A673 (cell line): ENCODE measurements at regions of chr2 and their contacts with region 1.

Region 1: DNA sequence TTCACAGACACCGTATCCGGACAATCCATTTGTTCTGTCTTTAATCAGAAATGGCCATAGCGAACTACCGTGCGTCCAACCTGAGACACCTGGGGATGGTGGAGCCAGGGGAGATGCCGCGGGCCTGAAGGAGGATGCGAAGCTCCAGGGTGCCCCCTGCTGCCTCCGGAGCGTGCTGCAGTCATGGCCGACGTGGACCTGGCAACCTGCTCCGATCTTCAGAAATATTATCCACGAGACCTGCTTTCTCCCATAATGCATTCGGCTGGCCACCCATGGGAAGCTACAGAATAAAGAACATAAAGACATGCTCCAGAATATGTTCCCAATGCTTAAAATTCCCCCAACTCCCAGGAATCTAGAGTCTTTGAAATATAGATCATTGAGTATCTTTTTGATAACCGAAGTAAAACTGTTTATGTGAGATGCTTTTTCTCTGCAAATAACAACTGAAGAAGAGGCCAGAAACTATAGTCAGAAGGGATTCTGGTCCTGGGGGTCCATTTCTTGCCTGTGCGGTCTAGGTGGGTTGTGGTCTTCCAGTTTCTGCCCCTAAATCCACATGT is 30.7 kb upstream of the SLC66A3 start:
- DNase-seq: peak; percentile 63
- H3K4me3 ChIP-seq: no peak overlapping the region
- H3K27ac ChIP-seq: no peak overlapping the region
- H3K4me1 ChIP-seq: peaks cover 4% of the 10 kb centered on the region
- H3K27me3 ChIP-seq: no peaks in the 10 kb centered on the region
- CTCF ChIP-seq: peak; percentile 92

Region 2: DNA sequence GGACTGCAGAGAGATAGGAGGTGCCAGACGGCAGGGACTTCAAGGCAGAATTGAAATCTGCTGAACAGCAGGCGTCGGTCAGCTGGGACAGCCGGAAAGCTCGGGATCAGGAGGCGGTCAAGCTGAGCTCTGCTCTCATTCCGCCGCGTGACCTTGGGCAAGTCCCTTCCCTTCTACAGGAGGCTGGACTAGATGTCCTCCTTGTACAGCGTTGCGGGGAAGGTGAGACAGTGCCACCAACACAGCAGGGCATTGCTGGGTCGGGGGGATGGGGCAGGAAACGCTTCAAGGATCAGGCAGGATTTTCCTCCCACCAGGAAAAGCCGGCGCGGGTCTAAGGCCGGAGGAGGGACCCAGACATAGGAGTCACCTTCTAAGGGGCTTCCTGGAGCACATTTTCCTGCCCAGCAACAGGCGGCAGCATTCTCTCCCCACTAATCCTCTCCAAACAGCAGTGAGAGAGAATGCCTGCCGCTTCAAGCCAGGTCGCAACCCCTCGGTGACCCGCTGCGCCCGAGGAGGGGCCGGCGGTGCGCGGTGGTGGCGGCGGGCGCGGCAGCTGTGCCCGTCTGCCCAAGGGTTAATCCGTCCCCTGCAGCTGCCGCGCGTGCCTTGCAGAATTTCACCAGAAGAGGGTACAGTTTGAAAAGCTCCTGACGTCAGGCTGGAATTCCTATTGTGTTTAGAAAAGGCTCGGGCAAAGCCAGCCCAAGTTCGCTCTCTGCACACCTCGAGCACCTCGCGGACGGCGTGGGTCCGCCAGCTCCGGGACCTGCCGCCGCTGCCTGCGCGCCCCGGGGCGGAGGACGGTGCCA is 213.1 kb before region 1 on chr2 and contains the start of gene KCNF1:
- CTCF ChIA-PET with region 1: interaction called, 5 read pairs
- POLR2A ChIA-PET with region 1: no interaction called
- intact Hi-C with region 1: loop called (anchors 10 kb)
- DNase-seq: peak; percentile 80
- H3K4me3 ChIP-seq: peak within 1 kb of the TSS; percentile 52
- H3K27ac ChIP-seq: no peak within 1 kb of the TSS
- H3K4me1 ChIP-seq: peaks cover 4% of the 10 kb centered on the region
- H3K27me3 ChIP-seq: peaks cover 6% of the 10 kb centered on the region
- CTCF ChIP-seq: peak; percentile 46
- total RNA-seq, gene KCNF1: 0.32 and 0.70 TPM in 2 replicates